H1 (cell line): ENCODE measurements at regions of chr2 and their contacts with region 1.

Region 1: DNA sequence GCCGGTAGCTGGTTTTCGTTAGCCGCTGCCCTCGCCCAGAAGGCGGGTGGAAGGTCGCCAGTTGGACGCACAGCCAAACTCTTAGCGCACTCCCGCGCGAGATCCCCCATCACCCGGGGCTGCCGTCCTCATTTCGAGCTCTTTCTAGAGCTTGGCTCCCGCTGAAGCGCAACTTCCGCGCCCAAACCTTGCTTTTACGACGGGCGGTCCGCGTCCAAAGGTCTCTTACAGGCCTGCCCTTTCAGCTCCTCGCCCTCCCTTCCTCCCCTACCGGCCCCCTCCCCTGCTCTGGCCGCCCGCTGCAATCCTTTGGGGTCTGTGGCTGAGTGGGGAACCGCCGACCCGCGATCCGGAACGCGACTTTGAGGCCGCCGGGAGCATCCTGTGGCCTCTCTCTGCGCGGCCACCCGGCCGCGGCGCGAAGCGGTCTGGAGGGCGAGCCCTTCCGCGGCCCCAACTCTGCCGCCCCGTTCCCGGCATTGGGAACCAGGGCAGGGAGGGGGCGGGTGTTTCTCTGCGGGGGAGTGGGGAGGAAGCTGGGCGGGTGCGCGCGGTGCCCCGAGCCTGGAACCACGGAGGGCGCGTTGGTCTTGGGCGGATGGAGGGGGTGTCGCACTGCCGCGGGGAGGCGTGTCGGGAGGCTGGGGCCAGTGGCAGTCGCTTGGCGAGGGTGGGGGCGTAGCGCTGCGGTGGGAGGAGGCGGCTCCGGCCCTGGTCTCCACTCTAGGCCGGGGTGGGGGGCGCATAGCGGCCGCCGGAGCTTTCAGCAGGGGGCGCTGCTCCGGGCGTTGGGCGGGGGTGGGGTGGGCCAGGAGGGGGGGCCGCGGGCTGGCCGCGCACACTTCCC is at the start of gene GDF7:
- DNase-seq: peak in 1 of 2 experiments; percentile 72
- H3K4me3 ChIP-seq: peak within 1 kb of the TSS; percentile 40 to 76 (median 58)
- H3K27ac ChIP-seq: no peak within 1 kb of the TSS
- H3K4me1 ChIP-seq: peaks cover 0 to 27% (median 13%) of the 10 kb centered on the region in 4 experiments; a peak in 6 of 7 replicates
- H3K27me3 ChIP-seq: peaks cover 85 to 96% (median 93%) of the 10 kb centered on the region in 4 experiments
- CTCF ChIP-seq: peak in 1 of 3 experiments; percentile 35; a peak in 2 of 4 replicates
- EP300 ChIP-seq: no peak
- POLR2A ChIP-seq: no peak
- RAD21 ChIP-seq: no peak
- total RNA-seq, gene GDF7: 0.04 and 0.06 TPM in 2 replicates

Region 2: GRCh38 chr2:20650880-20651730 is 15.4 kb before region 1 on chr2 and contains the start of gene HS1BP3:
- CTCF ChIA-PET with region 1: interaction called, 35 read pairs
- POLR2A ChIA-PET with region 1: interaction called, 12 read pairs
- DNase-seq: peak in 1 of 2 experiments; percentile 91
- H3K4me3 ChIP-seq: peak within 1 kb of the TSS; percentile 47 to 68 (median 56)
- H3K27ac ChIP-seq: no peak within 1 kb of the TSS
- H3K4me1 ChIP-seq: peaks cover 0 to 11% (median 7%) of the 10 kb centered on the region in 4 experiments; a peak in 5 of 7 replicates
- H3K27me3 ChIP-seq: peaks cover 0 to 4% (median under 1%) of the 10 kb centered on the region in 4 experiments; a peak in 4 of 7 replicates
- CTCF ChIP-seq: peak in 2 of 3 experiments; percentile 87 to 92; a peak in 3 of 4 replicates
- EP300 ChIP-seq: peak in 1 of 2 experiments; percentile 60; a peak in 1 of 3 replicates
- POLR2A ChIP-seq: peak in 1 of 2 experiments; percentile 74; a peak in 2 of 3 replicates
- RAD21 ChIP-seq: peak; percentile 49 to 76
- total RNA-seq, gene HS1BP3: 11.1 and 11.2 TPM in 2 replicates